CD8-positive, alpha-beta T cell (primary cell): ENCODE measurements at regions of chr6 and their contacts with region 1.

Region 1: GRCh38 chr6:137799950-137800568 is 67.0 kb upstream of the TNFAIP3 start:
- DNase-seq: peak; percentile 40 to 93 (median 72)
- ATAC-seq: peak; percentile 83
- H3K4me3 ChIP-seq: no peak overlapping the region
- H3K4me3 Mint-ChIP-seq: no peak overlapping the region
- H3K27ac ChIP-seq: peak overlapping the region in 1 of 2 experiments; percentile 4
- H3K27ac Mint-ChIP-seq: peak overlapping the region; percentile 56
- H3K4me1 ChIP-seq: peaks cover 47% of the 10 kb centered on the region
- H3K4me1 Mint-ChIP-seq: peaks cover 53% of the 10 kb centered on the region
- H3K27me3 ChIP-seq: no peaks in the 10 kb centered on the region
- H3K27me3 Mint-ChIP-seq: no peaks in the 10 kb centered on the region
- CTCF ChIP-seq: peak; percentile 68

Region 2: DNA sequence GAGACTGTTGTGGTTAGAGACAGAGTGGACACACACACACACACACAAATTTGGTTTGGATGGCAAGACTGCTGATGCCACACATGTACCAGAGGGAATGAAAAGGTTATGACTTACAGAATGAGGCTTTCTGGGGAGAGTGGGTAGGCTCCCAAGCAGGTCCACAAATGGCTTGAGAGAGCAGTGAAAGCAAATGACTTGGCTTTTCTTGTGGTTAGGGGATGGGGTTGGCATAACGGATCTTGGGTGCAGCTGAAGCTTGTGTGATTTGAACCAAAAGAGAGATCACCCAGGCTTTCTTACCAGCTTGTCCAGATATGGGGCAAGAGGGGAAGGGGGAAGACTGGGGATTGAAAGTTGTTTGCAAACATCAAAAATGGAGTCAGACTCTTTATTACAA is 232.0 kb before region 1 on chr6:
- CTCF ChIA-PET with region 1: no interaction called
- POLR2A ChIA-PET with region 1: no interaction called
- intact Hi-C with region 1: no loop called
- DNase-seq: no peak
- ATAC-seq: no peak
- H3K4me3 ChIP-seq: no peak overlapping the region
- H3K4me3 Mint-ChIP-seq: no peak overlapping the region
- H3K27ac ChIP-seq: no peak overlapping the region
- H3K27ac Mint-ChIP-seq: no peak overlapping the region
- H3K4me1 ChIP-seq: no peaks in the 10 kb centered on the region
- H3K4me1 Mint-ChIP-seq: no peaks in the 10 kb centered on the region
- H3K27me3 ChIP-seq: no peaks in the 10 kb centered on the region
- H3K27me3 Mint-ChIP-seq: peaks cover 2% of the 10 kb centered on the region
- CTCF ChIP-seq: no peak

Region 3: GRCh38 chr6:137717074-137718073 is 82.7 kb before region 1 on chr6:
- CTCF ChIA-PET with region 1: interaction called, 16 read pairs
- POLR2A ChIA-PET with region 1: interaction called, 6 read pairs
- intact Hi-C with region 1: no loop called
- DNase-seq: peak; percentile 57 to 95 (median 79)
- ATAC-seq: peak; percentile 50
- H3K4me3 ChIP-seq: no peak overlapping the region
- H3K4me3 Mint-ChIP-seq: peak overlapping the region; percentile 46
- H3K27ac ChIP-seq: peak overlapping the region; percentile 5 to 16
- H3K27ac Mint-ChIP-seq: peak overlapping the region; percentile 95
- H3K4me1 ChIP-seq: peaks cover 28% of the 10 kb centered on the region
- H3K4me1 Mint-ChIP-seq: peaks cover 47% of the 10 kb centered on the region
- H3K27me3 ChIP-seq: no peaks in the 10 kb centered on the region
- H3K27me3 Mint-ChIP-seq: no peaks in the 10 kb centered on the region
- CTCF ChIP-seq: no peak

Region 4: GRCh38 chr6:137811121-137811915 is 11.3 kb after region 1 on chr6:
- CTCF ChIA-PET with region 1: interaction called, 30 read pairs
- POLR2A ChIA-PET with region 1: interaction called, 9 read pairs
- intact Hi-C with region 1: no loop called
- DNase-seq: peak; percentile 53 to 97 (median 75)
- ATAC-seq: peak; percentile 96
- H3K4me3 ChIP-seq: peak overlapping the region; percentile 2 to 10
- H3K4me3 Mint-ChIP-seq: peak overlapping the region; percentile 61
- H3K27ac ChIP-seq: peak overlapping the region; percentile 26 to 80
- H3K27ac Mint-ChIP-seq: peak overlapping the region; percentile 91
- H3K4me1 ChIP-seq: peaks cover 25% of the 10 kb centered on the region
- H3K4me1 Mint-ChIP-seq: peaks cover 33% of the 10 kb centered on the region
- H3K27me3 ChIP-seq: no peaks in the 10 kb centered on the region
- H3K27me3 Mint-ChIP-seq: no peaks in the 10 kb centered on the region
- CTCF ChIP-seq: no peak

Region 5: DNA sequence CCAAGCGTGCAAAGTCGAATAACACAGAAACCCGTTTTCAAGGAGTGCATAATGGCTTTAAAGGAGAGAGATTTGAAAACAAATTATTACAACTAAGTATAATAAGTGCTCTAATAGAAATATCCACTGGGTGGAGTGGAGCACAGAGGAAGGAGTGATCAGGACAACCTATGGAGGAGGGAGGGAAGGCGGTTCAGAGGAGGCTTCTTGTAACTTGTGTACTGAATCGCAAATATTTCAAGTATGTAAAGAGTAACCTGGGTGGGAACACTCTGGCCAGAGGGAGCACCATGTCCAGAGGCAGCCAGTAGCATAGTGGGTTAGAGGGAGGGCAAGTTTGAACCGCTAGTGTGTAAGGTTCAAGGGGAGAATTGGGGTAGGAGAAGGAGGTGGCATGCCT is 45.4 kb after region 1 on chr6:
- CTCF ChIA-PET with region 1: no interaction called
- POLR2A ChIA-PET with region 1: no interaction called
- intact Hi-C with region 1: no loop called
- DNase-seq: no peak
- ATAC-seq: no peak
- H3K4me3 ChIP-seq: no peak overlapping the region
- H3K4me3 Mint-ChIP-seq: no peak overlapping the region
- H3K27ac ChIP-seq: no peak overlapping the region
- H3K27ac Mint-ChIP-seq: no peak overlapping the region
- H3K4me1 ChIP-seq: no peaks in the 10 kb centered on the region
- H3K4me1 Mint-ChIP-seq: no peaks in the 10 kb centered on the region
- H3K27me3 ChIP-seq: no peaks in the 10 kb centered on the region
- H3K27me3 Mint-ChIP-seq: no peaks in the 10 kb centered on the region
- CTCF ChIP-seq: no peak

Region 6: DNA sequence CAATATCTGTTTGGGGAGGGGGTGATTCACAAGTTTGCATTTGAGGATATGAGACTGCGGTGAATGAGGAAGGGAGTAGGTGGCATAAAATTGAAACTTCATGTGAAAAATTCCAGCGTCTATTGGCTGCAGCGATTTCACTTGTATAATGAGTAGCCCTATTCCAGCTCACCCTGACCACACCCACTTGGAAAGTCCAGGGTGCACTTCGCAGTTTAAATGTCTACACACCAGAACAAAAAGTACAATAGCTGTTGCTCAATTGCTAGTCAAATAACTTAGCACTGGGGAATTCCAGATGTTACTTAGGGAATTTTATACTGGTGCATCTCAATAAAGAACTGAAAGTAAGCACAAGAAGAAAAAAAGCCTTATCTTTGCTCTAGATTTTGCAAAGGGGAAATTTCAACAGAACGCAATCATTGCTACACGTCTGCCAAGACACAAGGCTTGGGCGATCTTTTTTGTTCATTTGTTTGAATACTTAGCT is 73.3 kb after region 1 on chr6:
- CTCF ChIA-PET with region 1: interaction called, 54 read pairs
- POLR2A ChIA-PET with region 1: interaction called, 40 read pairs
- intact Hi-C with region 1: no loop called
- DNase-seq: peak in 5 of 9 experiments; percentile 39 to 90 (median 54)
- ATAC-seq: peak; percentile 7
- H3K4me3 ChIP-seq: no peak overlapping the region
- H3K4me3 Mint-ChIP-seq: peak overlapping the region; percentile 98
- H3K27ac ChIP-seq: peak overlapping the region in 1 of 2 experiments; percentile 24
- H3K27ac Mint-ChIP-seq: peak overlapping the region; percentile 29
- H3K4me1 ChIP-seq: peaks cover 53% of the 10 kb centered on the region
- H3K4me1 Mint-ChIP-seq: peaks cover 71% of the 10 kb centered on the region
- H3K27me3 ChIP-seq: no peaks in the 10 kb centered on the region
- H3K27me3 Mint-ChIP-seq: no peaks in the 10 kb centered on the region
- CTCF ChIP-seq: no peak

Region 7: DNA sequence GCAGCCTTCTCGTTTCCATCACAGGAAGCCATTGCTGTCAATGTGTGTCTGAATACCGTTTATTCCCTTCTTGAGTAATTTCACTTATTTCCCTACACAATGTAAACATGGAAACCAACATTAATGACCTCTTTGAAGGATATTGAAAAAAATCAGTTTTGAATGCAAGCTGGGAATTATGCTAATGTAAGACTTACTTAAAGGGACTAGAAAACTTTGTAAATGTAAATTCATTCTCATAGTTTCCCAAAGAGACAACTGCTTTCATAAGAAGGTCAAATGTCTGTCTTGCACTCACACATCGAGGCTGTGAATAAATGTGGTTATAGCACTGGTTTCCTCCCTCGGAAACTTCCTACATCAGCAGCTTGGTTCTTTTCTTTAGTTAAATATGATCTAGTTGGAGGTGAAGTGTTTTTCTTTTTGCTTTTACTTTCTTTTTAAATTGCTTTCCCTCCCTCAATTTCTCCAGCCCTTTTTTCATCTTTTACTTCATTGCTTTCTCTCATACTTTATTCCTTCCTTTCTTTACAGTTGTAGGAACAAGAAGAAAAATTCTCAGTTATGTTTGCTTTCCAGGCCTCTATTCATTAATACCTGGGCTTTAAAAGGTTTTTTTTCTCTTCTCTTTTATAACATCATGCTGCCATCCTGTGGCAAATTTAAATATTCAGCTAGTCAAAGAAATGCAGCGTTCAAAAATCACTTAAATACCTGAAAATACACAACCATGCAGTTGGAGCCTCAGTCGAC is 175.3 kb after region 1 on chr6:
- CTCF ChIA-PET with region 1: interaction called, 22 read pairs
- POLR2A ChIA-PET with region 1: interaction called, 3 read pairs
- intact Hi-C with region 1: loop called (anchors 1 to 5 kb)
- DNase-seq: peak in 5 of 9 experiments; percentile 19 to 89 (median 38)
- ATAC-seq: peak; percentile 80
- H3K4me3 ChIP-seq: peak overlapping the region; percentile 18 to 21
- H3K4me3 Mint-ChIP-seq: peak overlapping the region; percentile 74
- H3K27ac ChIP-seq: peak overlapping the region; percentile 39 to 85
- H3K27ac Mint-ChIP-seq: peak overlapping the region; percentile 92
- H3K4me1 ChIP-seq: peaks cover 24% of the 10 kb centered on the region
- H3K4me1 Mint-ChIP-seq: peaks cover 40% of the 10 kb centered on the region
- H3K27me3 ChIP-seq: no peaks in the 10 kb centered on the region
- H3K27me3 Mint-ChIP-seq: no peaks in the 10 kb centered on the region
- CTCF ChIP-seq: peak; percentile 75

Region 8: GRCh38 chr6:137995371-137995770 is 195.3 kb after region 1 on chr6:
- CTCF ChIA-PET with region 1: no interaction called
- POLR2A ChIA-PET with region 1: no interaction called
- intact Hi-C with region 1: no loop called
- DNase-seq: no peak
- ATAC-seq: no peak
- H3K4me3 ChIP-seq: no peak overlapping the region
- H3K4me3 Mint-ChIP-seq: no peak overlapping the region
- H3K27ac ChIP-seq: no peak overlapping the region
- H3K27ac Mint-ChIP-seq: no peak overlapping the region
- H3K4me1 ChIP-seq: no peaks in the 10 kb centered on the region
- H3K4me1 Mint-ChIP-seq: no peaks in the 10 kb centered on the region
- H3K27me3 ChIP-seq: no peaks in the 10 kb centered on the region
- H3K27me3 Mint-ChIP-seq: peaks cover 3% of the 10 kb centered on the region
- CTCF ChIP-seq: no peak

Region 9: GRCh38 chr6:138509371-138509770 is 709.3 kb after region 1 on chr6:
- CTCF ChIA-PET with region 1: no interaction called
- POLR2A ChIA-PET with region 1: no interaction called
- intact Hi-C with region 1: no loop called
- DNase-seq: peak in 6 of 9 experiments; percentile 5 to 59 (median 32)
- ATAC-seq: no peak
- H3K4me3 ChIP-seq: no peak overlapping the region
- H3K4me3 Mint-ChIP-seq: no peak overlapping the region
- H3K27ac ChIP-seq: no peak overlapping the region
- H3K27ac Mint-ChIP-seq: no peak overlapping the region
- H3K4me1 ChIP-seq: no peaks in the 10 kb centered on the region
- H3K4me1 Mint-ChIP-seq: peaks cover 4% of the 10 kb centered on the region
- H3K27me3 ChIP-seq: peaks cover 0 to 2% of the 10 kb centered on the region in 2 experiments
- H3K27me3 Mint-ChIP-seq: no peaks in the 10 kb centered on the region
- CTCF ChIP-seq: peak; percentile 52